Natural killer cell (primary cell): ENCODE measurements at regions of chr7 and their contacts with region 1.

Region 1: DNA sequence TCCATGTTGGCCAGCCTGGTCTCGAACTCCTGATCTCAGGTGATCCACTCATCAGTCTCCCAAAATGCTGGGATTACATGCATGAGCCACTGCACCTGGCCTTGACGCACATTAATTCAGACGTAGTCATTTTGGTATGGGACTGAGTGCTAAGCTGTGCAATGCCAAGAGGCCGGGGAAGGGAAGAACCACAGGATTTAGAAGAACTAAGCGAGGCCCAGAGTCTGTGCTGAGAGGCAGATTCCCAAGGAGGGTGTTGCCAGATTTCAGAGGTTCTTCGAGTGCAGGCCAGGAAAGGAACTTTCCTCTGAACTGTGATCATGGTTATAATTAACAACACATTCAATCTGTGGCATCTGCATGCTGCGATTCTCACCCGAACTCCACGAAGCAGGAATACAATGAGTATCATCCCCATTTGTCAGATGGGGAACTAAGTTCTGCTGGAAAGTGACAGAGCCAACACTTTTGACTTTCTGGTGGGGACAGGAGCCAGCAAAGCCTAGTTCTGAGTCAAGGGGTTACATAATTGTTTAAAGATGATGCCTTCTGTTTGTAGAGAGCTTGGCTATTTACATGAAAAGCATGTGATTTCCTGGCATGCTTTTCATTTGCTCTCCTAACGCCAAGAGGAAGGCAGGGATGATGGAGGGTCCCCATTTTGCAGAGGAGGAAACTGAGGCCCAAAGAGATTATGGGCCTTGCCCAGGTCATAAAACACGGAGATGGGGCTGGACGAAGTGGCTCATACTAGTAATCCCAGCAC is 6.2 kb upstream of the ZAN start:
- DNase-seq: no peak
- ATAC-seq: no peak
- H3K4me3 ChIP-seq: no peak overlapping the region
- H3K4me3 Mint-ChIP-seq: no peak overlapping the region
- H3K27ac ChIP-seq: no peak overlapping the region
- H3K27ac Mint-ChIP-seq: no peak overlapping the region
- H3K4me1 ChIP-seq: peaks cover 5% of the 10 kb centered on the region
- H3K4me1 Mint-ChIP-seq: peaks cover 6 to 7% of the 10 kb centered on the region in 2 donors
- H3K27me3 ChIP-seq: no peaks in the 10 kb centered on the region
- H3K27me3 Mint-ChIP-seq: peaks cover 14% of the 10 kb centered on the region in 2 donors
- CTCF ChIP-seq: no peak

Region 2: GRCh38 chr7:99562832-99563231 is 1164.3 kb before region 1 on chr7:
- intact Hi-C with region 1: no loop called
- DNase-seq: no peak
- ATAC-seq: no peak
- H3K4me3 ChIP-seq: no peak overlapping the region
- H3K4me3 Mint-ChIP-seq: peak overlapping the region; percentile 29
- H3K27ac ChIP-seq: no peak overlapping the region
- H3K27ac Mint-ChIP-seq: peak overlapping the region; percentile 75
- H3K4me1 ChIP-seq: peaks cover 21% of the 10 kb centered on the region
- H3K4me1 Mint-ChIP-seq: peaks cover 37 to 45% of the 10 kb centered on the region in 2 donors
- H3K27me3 ChIP-seq: no peaks in the 10 kb centered on the region
- H3K27me3 Mint-ChIP-seq: no peaks in the 10 kb centered on the region
- CTCF ChIP-seq: no peak

Region 3: DNA sequence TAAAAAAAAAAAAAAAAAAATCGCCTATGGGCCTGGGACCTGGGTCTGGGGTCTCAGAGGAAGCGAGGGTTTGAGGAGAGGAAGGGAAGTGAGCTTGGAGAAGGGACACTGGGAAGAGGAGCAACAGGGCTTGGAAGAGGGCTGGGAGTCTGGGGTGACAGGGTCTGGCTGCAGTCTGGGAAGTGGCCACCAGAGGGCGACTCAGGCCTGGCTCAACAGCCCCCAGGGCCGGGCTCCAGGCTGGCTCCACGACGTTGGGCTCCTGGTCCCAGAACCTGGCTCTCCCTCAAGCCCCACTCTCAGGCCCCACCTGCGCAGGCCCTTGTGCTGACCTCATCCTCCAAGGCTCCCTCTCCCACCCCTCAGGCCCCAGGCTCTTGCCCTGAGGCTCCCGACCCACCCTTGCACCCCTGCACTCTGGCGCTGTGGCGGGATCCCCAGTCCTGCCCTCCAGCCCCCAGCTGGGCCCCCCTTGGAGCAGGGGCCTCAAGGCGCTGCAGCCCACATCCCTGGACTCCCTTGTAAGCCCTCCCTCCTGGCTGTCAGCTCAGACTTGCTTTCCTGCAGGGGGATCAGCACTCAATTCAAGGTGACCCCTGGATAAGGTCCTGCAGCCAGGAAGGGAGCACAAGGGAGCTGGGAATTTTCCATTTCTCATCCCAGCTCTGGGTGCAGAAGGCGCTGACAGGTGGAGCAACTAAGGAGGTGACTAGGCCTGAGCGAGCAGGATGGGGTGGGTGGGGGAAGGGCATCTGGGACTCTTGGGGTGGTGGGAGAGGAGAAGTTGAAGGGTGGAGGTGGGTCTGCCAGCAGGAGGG is 257.7 kb before region 1 on chr7:
- intact Hi-C with region 1: loop called (anchors 2 kb)
- DNase-seq: peak; percentile 84 to 91
- ATAC-seq: peak; percentile 91 to 98 (median 94)
- H3K4me3 ChIP-seq: no peak overlapping the region
- H3K4me3 Mint-ChIP-seq: no peak overlapping the region
- H3K27ac ChIP-seq: no peak overlapping the region
- H3K27ac Mint-ChIP-seq: peak overlapping the region in 1 of 2 donors; percentile 18
- H3K4me1 ChIP-seq: peaks cover 26% of the 10 kb centered on the region
- H3K4me1 Mint-ChIP-seq: peaks cover 0 to 34% of the 10 kb centered on the region in 2 donors
- H3K27me3 ChIP-seq: no peaks in the 10 kb centered on the region
- H3K27me3 Mint-ChIP-seq: no peaks in the 10 kb centered on the region
- CTCF ChIP-seq: peak; percentile 86

Region 4: DNA sequence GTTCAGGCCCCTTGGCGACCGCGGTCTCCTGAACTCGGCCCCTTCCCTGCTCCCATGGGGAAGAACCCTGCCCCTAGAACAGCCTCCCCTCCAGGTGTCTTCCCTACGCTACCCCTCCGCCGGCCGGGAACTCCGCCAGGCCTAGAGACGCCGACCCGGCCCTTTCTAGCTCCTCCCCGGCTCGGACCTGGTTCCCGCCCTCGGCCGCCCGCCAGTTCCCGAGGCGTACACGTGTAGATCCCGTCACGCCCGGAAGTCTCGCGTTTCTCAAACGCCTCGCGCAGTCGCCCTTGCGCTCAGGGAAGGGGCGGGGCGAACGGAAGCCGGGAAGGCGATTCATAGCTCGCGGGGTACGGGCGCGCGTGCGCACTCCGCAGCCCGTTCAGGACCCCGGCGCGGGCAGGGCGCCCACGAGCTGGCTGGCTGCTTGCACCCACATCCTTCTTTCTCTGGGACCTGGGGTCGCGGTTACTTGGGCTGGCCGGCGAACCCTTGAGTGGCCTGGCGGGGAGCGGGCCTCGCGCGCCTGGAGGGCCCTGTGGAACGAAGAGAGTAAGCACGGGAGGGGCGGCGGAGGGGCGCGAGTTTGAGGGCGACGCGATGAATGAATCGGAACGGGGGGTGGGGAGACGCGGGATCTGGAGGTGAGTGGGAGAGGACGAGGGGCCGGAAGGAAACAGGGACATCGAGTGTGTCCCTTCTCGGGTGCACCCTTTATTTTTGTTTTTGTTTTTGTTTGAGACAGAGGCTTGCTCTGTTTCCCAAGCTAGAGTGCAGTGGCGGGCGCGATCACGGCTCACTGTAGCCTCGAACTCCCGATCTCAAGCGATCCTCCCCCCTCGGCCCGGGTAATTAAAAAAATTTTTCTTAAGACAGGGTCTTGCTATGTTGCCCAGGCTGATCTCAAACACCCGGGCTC is 21.2 kb before region 1 on chr7 and contains the start of gene POP7:
- intact Hi-C with region 1: loop called (anchors 1 kb)
- DNase-seq: peak; percentile 98 to 99
- ATAC-seq: peak; percentile 96 to 99 (median 97)
- H3K4me3 ChIP-seq: peak within 1 kb of the TSS; percentile 86
- H3K4me3 Mint-ChIP-seq: peak within 1 kb of the TSS; percentile 98
- H3K27ac ChIP-seq: peak within 1 kb of the TSS; percentile 86
- H3K27ac Mint-ChIP-seq: peak within 1 kb of the TSS; percentile 89 to 97
- H3K4me1 ChIP-seq: peaks cover 16% of the 10 kb centered on the region
- H3K4me1 Mint-ChIP-seq: peaks cover 6 to 21% of the 10 kb centered on the region in 2 donors
- H3K27me3 ChIP-seq: no peaks in the 10 kb centered on the region
- H3K27me3 Mint-ChIP-seq: peaks cover 0 to 5% of the 10 kb centered on the region in 2 donors
- CTCF ChIP-seq: no peak
- total RNA-seq, gene POP7: 17.6 to 22.1 (median 17.6) TPM

Region 5: DNA sequence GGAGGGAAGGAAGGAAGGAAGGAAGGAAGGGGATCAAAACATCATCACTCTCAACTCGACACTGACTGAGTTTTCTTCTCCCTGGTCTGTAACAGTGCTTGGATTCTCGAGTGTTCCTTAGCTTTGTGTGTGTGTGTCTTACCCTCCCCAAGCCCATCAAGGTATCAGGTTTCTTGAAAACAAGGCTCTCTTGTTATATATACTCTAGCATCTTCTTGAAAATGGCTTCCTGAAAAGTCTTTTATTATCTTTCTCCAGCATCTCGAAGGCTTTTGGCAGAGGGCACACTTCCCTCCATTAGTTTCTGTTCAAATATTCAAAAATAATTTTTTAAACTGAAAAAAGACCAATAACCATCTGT is 413.1 kb after region 1 on chr7:
- intact Hi-C with region 1: no loop called
- DNase-seq: no peak
- ATAC-seq: no peak
- H3K4me3 ChIP-seq: no peak overlapping the region
- H3K4me3 Mint-ChIP-seq: no peak overlapping the region
- H3K27ac ChIP-seq: no peak overlapping the region
- H3K27ac Mint-ChIP-seq: peak overlapping the region; percentile 23 to 98
- H3K4me1 ChIP-seq: peaks cover 26% of the 10 kb centered on the region
- H3K4me1 Mint-ChIP-seq: peaks cover 26 to 42% of the 10 kb centered on the region in 2 donors
- H3K27me3 ChIP-seq: peaks cover 3% of the 10 kb centered on the region
- H3K27me3 Mint-ChIP-seq: peaks cover 15 to 17% of the 10 kb centered on the region in 2 donors
- CTCF ChIP-seq: no peak

Region 6: DNA sequence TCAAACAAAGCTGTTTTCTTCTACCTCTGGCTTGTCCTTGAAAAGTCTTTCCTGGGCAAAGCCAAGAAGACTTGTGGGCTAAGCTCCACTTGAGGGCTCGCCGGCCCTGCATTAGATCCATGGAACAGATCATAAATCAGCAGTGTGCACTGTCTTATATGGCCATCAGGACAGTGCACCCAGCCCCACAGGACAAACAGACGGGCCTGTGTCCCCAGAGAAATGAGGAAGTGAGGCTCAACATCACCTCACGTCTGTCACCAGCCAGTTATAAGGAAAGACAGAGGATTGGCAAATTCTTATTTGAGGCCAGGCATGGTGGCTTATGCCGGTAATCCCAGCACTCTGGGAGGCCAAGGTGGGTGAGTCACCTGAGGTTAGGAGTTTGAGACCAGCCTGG is 606.7 kb after region 1 on chr7:
- intact Hi-C with region 1: no loop called
- DNase-seq: no peak
- ATAC-seq: no peak
- H3K4me3 ChIP-seq: no peak overlapping the region
- H3K4me3 Mint-ChIP-seq: no peak overlapping the region
- H3K27ac ChIP-seq: no peak overlapping the region
- H3K27ac Mint-ChIP-seq: no peak overlapping the region
- H3K4me1 ChIP-seq: no peaks in the 10 kb centered on the region
- H3K4me1 Mint-ChIP-seq: no peaks in the 10 kb centered on the region
- H3K27me3 ChIP-seq: no peaks in the 10 kb centered on the region
- H3K27me3 Mint-ChIP-seq: no peaks in the 10 kb centered on the region
- CTCF ChIP-seq: no peak